Endothelial cell of umbilical vein (primary cell): ENCODE measurements at regions of chr15 and their contacts with region 1.

Region 1: GRCh38 chr15:48645558-48646330 is at the start of gene FBN1:
- DNase-seq: peak; percentile 88
- H3K4me3 ChIP-seq: peak within 1 kb of the TSS; percentile 50 to 92 (median 77)
- H3K27ac ChIP-seq: peak within 1 kb of the TSS; percentile 70
- H3K4me1 ChIP-seq: peaks cover 34% of the 10 kb centered on the region
- H3K27me3 ChIP-seq: no peaks in the 10 kb centered on the region
- CTCF ChIP-seq: no peak
- POLR2A ChIP-seq: peak; percentile 57
- total RNA-seq, gene FBN1: 88.1 and 111 TPM in 2 replicates

Region 2: GRCh38 chr15:48449734-48450133 is 196.0 kb before region 1 on chr15:
- CTCF ChIA-PET with region 1: interaction called, 3 read pairs
- POLR2A ChIA-PET with region 1: no interaction called
- dilution Hi-C with region 1: no loop called
- intact Hi-C with region 1: loop called (anchors 1 kb)
- DNase-seq: no peak
- H3K4me3 ChIP-seq: no peak overlapping the region
- H3K27ac ChIP-seq: no peak overlapping the region
- H3K4me1 ChIP-seq: peaks cover 38% of the 10 kb centered on the region
- H3K27me3 ChIP-seq: no peaks in the 10 kb centered on the region
- CTCF ChIP-seq: no peak
- POLR2A ChIP-seq: no peak

Region 3: DNA sequence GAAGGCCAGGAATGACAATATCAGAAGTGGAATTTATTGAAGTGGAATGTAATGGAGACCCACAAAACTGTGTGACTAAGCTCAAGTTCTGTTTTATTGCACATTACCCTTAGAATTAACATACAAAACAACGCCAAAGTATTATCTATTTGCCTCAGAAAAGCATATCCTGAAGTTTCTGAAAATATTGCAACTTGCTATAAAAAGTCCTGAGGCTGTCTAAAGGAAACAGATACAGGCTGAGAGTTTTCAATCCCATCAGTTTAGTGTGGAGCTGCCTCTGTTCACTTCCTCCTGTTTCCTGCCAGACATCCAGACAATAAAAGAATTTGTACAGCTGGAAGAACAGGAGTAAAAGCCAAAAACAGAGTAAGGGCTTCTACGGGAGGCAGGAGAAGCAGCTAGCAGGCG is 109.1 kb before region 1 on chr15:
- CTCF ChIA-PET with region 1: interaction called, 4 read pairs
- POLR2A ChIA-PET with region 1: no interaction called
- dilution Hi-C with region 1: no loop called
- intact Hi-C with region 1: loop called (anchors 1 kb)
- DNase-seq: peak; percentile 96
- H3K4me3 ChIP-seq: peak overlapping the region in 1 of 3 experiments; percentile 5
- H3K27ac ChIP-seq: peak overlapping the region; percentile 91
- H3K4me1 ChIP-seq: peaks cover 24% of the 10 kb centered on the region
- H3K27me3 ChIP-seq: no peaks in the 10 kb centered on the region
- CTCF ChIP-seq: no peak
- POLR2A ChIP-seq: peak; percentile 44

Region 4: DNA sequence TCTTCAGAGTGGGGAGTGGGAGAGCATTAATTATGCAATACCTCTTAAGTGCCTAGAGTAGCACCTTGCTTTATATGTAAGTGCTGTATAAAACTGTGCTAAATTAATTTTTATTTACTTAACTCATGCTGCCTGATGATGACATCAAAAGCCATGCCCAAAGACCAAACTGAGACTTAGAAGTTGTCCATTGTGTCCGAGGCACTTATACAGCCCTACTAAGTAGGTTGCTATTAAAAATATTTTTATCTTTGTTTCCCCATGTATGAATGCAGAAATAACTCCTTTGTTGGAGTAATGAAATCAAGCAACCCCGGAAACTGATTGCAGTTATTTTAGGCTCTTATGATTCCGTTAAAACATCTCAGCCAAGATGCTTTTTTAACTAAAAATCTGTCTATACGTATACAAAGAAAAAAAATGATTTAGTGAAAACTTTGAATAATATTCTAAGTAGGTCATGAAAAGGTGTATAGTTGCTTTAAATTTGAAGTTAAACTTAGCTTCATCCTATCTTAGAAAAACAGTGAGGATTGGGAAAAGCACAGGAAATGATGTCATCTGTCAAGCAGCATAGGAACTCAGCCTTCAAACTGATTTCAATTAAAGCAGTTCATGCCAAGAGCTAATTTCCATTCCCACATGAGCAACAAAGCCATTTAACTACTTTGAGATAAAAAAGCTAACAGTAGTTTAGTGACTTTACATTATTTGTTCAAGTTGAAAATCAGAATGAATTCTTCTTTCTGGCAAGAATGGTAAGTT is 43.2 kb before region 1 on chr15:
- CTCF ChIA-PET with region 1: interaction called, 3 read pairs
- POLR2A ChIA-PET with region 1: no interaction called
- dilution Hi-C with region 1: no loop called
- intact Hi-C with region 1: loop called (anchors 1 kb)
- DNase-seq: peak; percentile 91
- H3K4me3 ChIP-seq: peak overlapping the region in 1 of 3 experiments; percentile 13
- H3K27ac ChIP-seq: peak overlapping the region; percentile 71
- H3K4me1 ChIP-seq: peaks cover 26% of the 10 kb centered on the region
- H3K27me3 ChIP-seq: no peaks in the 10 kb centered on the region
- CTCF ChIP-seq: no peak
- POLR2A ChIP-seq: no peak

Region 5: GRCh38 chr15:48774484-48774883 is 128.7 kb after region 1 on chr15:
- CTCF ChIA-PET with region 1: no interaction called
- POLR2A ChIA-PET with region 1: no interaction called
- dilution Hi-C with region 1: no loop called
- intact Hi-C with region 1: loop called (anchors 10 kb)
- DNase-seq: no peak
- H3K4me3 ChIP-seq: no peak overlapping the region
- H3K27ac ChIP-seq: no peak overlapping the region
- H3K4me1 ChIP-seq: peaks cover 23% of the 10 kb centered on the region
- H3K27me3 ChIP-seq: no peaks in the 10 kb centered on the region
- CTCF ChIP-seq: no peak
- POLR2A ChIP-seq: no peak

Region 6: GRCh38 chr15:48810414-48811317 is 164.9 kb after region 1 on chr15 and contains the start of gene CEP152:
- CTCF ChIA-PET with region 1: interaction called, 3 read pairs
- POLR2A ChIA-PET with region 1: interaction called, 6 read pairs
- dilution Hi-C with region 1: no loop called
- intact Hi-C with region 1: loop called (anchors 1 kb)
- DNase-seq: peak; percentile 100
- H3K4me3 ChIP-seq: peak within 1 kb of the TSS; percentile 59 to 90 (median 62)
- H3K27ac ChIP-seq: peak within 1 kb of the TSS; percentile 64
- H3K4me1 ChIP-seq: peaks cover 12% of the 10 kb centered on the region
- H3K27me3 ChIP-seq: peaks cover 7 to 9% of the 10 kb centered on the region in 2 experiments
- CTCF ChIP-seq: no peak
- POLR2A ChIP-seq: peak; percentile 61
- total RNA-seq, gene CEP152: 13.8 and 15.7 TPM in 2 replicates

Region 7: GRCh38 chr15:49155110-49155833 is 509.5 kb after region 1 on chr15 and contains the start of gene COPS2:
- CTCF ChIA-PET with region 1: no interaction called
- POLR2A ChIA-PET with region 1: no interaction called
- dilution Hi-C with region 1: no loop called
- intact Hi-C with region 1: loop called (anchors 5 kb)
- DNase-seq: peak; percentile 99
- H3K4me3 ChIP-seq: peak within 1 kb of the TSS; percentile 82 to 96 (median 83)
- H3K27ac ChIP-seq: peak within 1 kb of the TSS; percentile 62
- H3K4me1 ChIP-seq: peaks cover 23% of the 10 kb centered on the region
- H3K27me3 ChIP-seq: no peaks in the 10 kb centered on the region
- CTCF ChIP-seq: no peak
- POLR2A ChIP-seq: peak; percentile 60
- total RNA-seq, gene COPS2: 74.9 and 79.3 TPM in 2 replicates